ENCODE measurements at regions of chr19 and their contacts with region 1.

Region 1: DNA sequence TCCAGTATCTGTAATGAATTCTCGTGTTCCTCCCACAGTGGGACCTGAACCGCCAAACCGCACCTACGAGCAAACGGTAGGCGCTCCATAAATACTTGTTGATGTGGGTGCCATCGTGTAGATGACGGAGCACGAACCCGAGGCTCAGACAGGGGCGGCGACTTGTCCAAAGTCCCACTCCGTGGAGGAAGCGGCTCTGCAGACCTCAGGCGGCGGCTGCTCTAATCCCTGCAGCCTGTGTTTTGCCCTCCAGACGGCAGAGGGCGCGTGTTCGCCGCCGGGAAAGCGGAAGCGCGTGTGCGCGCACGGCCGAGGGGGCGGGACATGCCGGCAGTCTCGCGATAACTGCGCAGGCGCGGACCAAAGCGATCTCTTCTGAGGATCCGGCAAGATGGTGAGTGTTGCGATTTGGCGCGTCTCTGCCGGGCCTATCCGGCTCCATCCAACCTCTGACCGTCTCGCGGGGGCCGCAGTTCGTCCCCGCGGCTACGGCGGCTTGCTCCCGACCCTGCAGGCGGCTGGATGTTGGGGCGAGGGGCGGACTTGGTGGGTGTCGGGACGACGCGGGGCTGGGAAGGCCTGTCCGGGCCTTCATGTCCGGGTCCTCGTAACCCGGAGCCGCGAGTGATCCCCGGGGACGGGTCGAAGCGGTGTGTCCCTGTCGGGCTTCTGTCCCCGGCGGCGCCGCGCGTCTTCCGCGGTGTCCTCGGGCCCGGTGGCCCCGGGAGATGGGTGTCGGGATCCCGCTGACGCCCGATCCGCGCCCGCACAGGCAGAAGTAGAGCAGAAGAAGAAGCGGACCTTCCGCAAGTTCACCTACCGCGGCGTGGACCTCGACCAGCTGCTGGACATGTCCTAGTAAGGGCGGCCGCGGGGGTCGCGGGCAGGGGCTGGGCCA is at the start of gene RPS15:
- DNase-seq: peak; percentile 92 to 98 (median 96)
- ATAC-seq: peak; percentile 90
- H3K4me3 ChIP-seq: peak within 1 kb of the TSS; percentile 79 to 95
- H3K4me3 Mint-ChIP-seq: peak within 1 kb of the TSS; percentile 98
- H3K27ac ChIP-seq: peak within 1 kb of the TSS; percentile 82 to 93
- H3K27ac Mint-ChIP-seq: peak within 1 kb of the TSS; percentile 100
- H3K4me1 ChIP-seq: peaks cover 22% of the 10 kb centered on the region
- H3K4me1 Mint-ChIP-seq: peaks cover 21% of the 10 kb centered on the region
- H3K27me3 ChIP-seq: no peaks in the 10 kb centered on the region
- H3K27me3 Mint-ChIP-seq: no peaks in the 10 kb centered on the region
- CTCF ChIP-seq: peak; percentile 95
- total RNA-seq, gene RPS15: 2,066 to 2,071 TPM

Region 2: GRCh38 chr19:1355568-1356507 is 82.4 kb before region 1 on chr19:
- CTCF ChIA-PET with region 1: no interaction called
- POLR2A ChIA-PET with region 1: no interaction called
- intact Hi-C with region 1: loop called in 1 of 2 experiments (anchors 1 kb)
- DNase-seq: peak in 1 of 9 experiments; percentile 33
- ATAC-seq: no peak
- H3K4me3 ChIP-seq: peak overlapping the region; percentile 71 to 74
- H3K4me3 Mint-ChIP-seq: peak overlapping the region; percentile 85
- H3K27ac ChIP-seq: no peak overlapping the region
- H3K27ac Mint-ChIP-seq: peak overlapping the region; percentile 4
- H3K4me1 ChIP-seq: peaks cover 10% of the 10 kb centered on the region
- H3K4me1 Mint-ChIP-seq: peaks cover 12% of the 10 kb centered on the region
- H3K27me3 ChIP-seq: no peaks in the 10 kb centered on the region
- H3K27me3 Mint-ChIP-seq: no peaks in the 10 kb centered on the region
- CTCF ChIP-seq: no peak

Region 3: DNA sequence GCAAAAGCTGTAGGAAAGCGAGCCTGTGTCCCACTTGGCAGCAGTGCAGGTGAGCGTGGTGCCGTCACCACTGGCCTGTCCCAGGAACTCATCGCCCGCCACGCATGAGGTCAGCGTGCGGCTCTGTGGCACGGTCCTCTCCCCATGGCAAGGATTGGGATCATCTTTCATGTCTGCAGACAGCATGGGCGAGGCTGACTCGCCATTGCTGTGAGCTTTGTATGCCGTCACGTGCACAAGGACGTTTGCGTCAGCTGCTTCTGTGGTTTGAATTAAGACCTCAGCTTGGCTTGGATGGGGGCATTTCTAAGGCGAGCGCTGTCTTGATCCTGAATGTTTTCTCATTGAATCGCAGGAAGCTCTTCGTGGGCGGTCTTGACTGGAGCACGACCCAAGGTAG is 21.1 kb before region 1 on chr19:
- CTCF ChIA-PET with region 1: no interaction called
- POLR2A ChIA-PET with region 1: no interaction called
- intact Hi-C with region 1: loop called in 1 of 2 experiments (anchors 2 kb)
- DNase-seq: no peak
- ATAC-seq: no peak
- H3K4me3 ChIP-seq: no peak overlapping the region
- H3K4me3 Mint-ChIP-seq: no peak overlapping the region
- H3K27ac ChIP-seq: no peak overlapping the region
- H3K27ac Mint-ChIP-seq: peak overlapping the region; percentile 66
- H3K4me1 ChIP-seq: peaks cover 49% of the 10 kb centered on the region
- H3K4me1 Mint-ChIP-seq: peaks cover 54% of the 10 kb centered on the region
- H3K27me3 ChIP-seq: no peaks in the 10 kb centered on the region
- H3K27me3 Mint-ChIP-seq: no peaks in the 10 kb centered on the region
- CTCF ChIP-seq: no peak

Measured in CD8-positive, alpha-beta T cell (primary cell).